ENCODE measurements at regions of chr3 and their contacts with region 1.

Region 1: GRCh38 chr3:185983495-185984141 is 45.8 kb upstream of the TRA2B start:
- DNase-seq: peak; percentile 62 to 85
- H3K4me3 ChIP-seq: no peak overlapping the region
- H3K27ac ChIP-seq: no peak overlapping the region
- H3K4me1 ChIP-seq: no peaks in the 10 kb centered on the region
- H3K27me3 ChIP-seq: no peaks in the 10 kb centered on the region
- CTCF ChIP-seq: peak; percentile 99

Region 2: GRCh38 chr3:185645596-185646381 is 337.8 kb before region 1 on chr3:
- CTCF ChIA-PET with region 1: no interaction called
- POLR2A ChIA-PET with region 1: no interaction called
- intact Hi-C with region 1: no loop called
- DNase-seq: no peak
- H3K4me3 ChIP-seq: no peak overlapping the region
- H3K27ac ChIP-seq: no peak overlapping the region
- H3K4me1 ChIP-seq: no peaks in the 10 kb centered on the region
- H3K27me3 ChIP-seq: no peaks in the 10 kb centered on the region
- CTCF ChIP-seq: no peak

Region 3: GRCh38 chr3:185659942-185660921 is 323.4 kb before region 1 on chr3:
- CTCF ChIA-PET with region 1: interaction called, 6 read pairs
- POLR2A ChIA-PET with region 1: interaction called, 3 read pairs
- intact Hi-C with region 1: loop called (anchors 2 kb)
- DNase-seq: peak; percentile 74
- H3K4me3 ChIP-seq: no peak overlapping the region
- H3K27ac ChIP-seq: peak overlapping the region; percentile 1; the same call in 1 of the 2 replicates
- H3K4me1 ChIP-seq: peaks cover 17% of the 10 kb centered on the region
- H3K27me3 ChIP-seq: no peaks in the 10 kb centered on the region
- CTCF ChIP-seq: peak; percentile 100

Region 4: GRCh38 chr3:185687271-185687878 is 296.2 kb before region 1 on chr3:
- CTCF ChIA-PET with region 1: no interaction called
- POLR2A ChIA-PET with region 1: interaction called, 17 read pairs
- intact Hi-C with region 1: no loop called
- DNase-seq: peak; percentile 21 to 51
- H3K4me3 ChIP-seq: no peak overlapping the region
- H3K27ac ChIP-seq: peak overlapping the region; percentile 93
- H3K4me1 ChIP-seq: peaks cover 59% of the 10 kb centered on the region
- H3K27me3 ChIP-seq: no peaks in the 10 kb centered on the region
- CTCF ChIP-seq: no peak

Region 5: GRCh38 chr3:186108941-186109865 is 125.6 kb after region 1 on chr3 and contains the start of gene ETV5:
- CTCF ChIA-PET with region 1: no interaction called
- POLR2A ChIA-PET with region 1: no interaction called
- intact Hi-C with region 1: loop called (anchors 5 kb)
- DNase-seq: peak; percentile 100
- H3K4me3 ChIP-seq: peak within 1 kb of the TSS; percentile 87
- H3K27ac ChIP-seq: peak within 1 kb of the TSS; percentile 80
- H3K4me1 ChIP-seq: peaks cover 40% of the 10 kb centered on the region
- H3K27me3 ChIP-seq: no peaks in the 10 kb centered on the region
- CTCF ChIP-seq: no peak
- total RNA-seq, gene ETV5: 39.3 and 65.7 TPM in 2 replicates

Region 6: GRCh38 chr3:186259612-186260383 is 276.2 kb after region 1 on chr3:
- CTCF ChIA-PET with region 1: no interaction called
- POLR2A ChIA-PET with region 1: no interaction called
- intact Hi-C with region 1: loop called (anchors 5 kb)
- DNase-seq: peak; percentile 73 to 81
- H3K4me3 ChIP-seq: peak overlapping the region; percentile 23; the same call in 1 of the 2 replicates
- H3K27ac ChIP-seq: no peak overlapping the region
- H3K4me1 ChIP-seq: peaks cover 6% of the 10 kb centered on the region
- H3K27me3 ChIP-seq: peaks cover 4% of the 10 kb centered on the region; the same call in 1 of the 2 replicates
- CTCF ChIP-seq: peak; percentile 93

Region 7: DNA sequence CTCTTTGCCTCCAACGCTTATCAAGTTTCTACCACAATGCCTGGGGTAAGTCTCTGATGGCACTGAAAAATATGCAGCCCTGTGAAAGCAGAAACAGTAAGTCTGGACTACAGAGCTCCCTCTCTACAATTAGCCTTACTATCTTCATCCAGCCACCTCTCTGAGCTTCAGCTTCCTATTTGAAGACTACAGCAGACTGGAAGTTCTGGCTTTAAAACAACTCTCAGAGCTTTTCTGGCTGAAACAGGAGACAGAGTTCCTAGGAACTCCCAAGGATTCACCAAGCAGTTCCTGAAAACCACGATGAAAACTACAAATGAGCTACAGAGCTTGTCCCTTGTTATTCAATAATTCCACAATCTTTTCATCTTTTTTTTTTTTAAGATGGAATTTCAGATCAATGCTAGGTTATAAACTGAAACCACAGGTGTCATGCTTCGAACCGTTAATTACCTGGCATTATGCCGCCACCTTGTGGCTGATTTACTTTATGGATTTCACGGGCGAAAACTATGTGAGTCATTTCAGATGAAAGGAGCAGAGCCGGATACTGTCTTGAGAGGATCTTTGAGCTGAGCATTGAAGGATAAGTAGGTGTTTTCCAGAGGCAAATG is 556.7 kb after region 1 on chr3:
- CTCF ChIA-PET with region 1: interaction called, 3 read pairs
- POLR2A ChIA-PET with region 1: no interaction called
- intact Hi-C with region 1: loop called (anchors 1 kb)
- DNase-seq: peak; percentile 79 to 86
- H3K4me3 ChIP-seq: no peak overlapping the region; the same call in 1 of the 2 replicates
- H3K27ac ChIP-seq: no peak overlapping the region
- H3K4me1 ChIP-seq: 0 out of 2 replicates have a peak, but pooled peaks cover 3% of the 10 kb centered on the region
- H3K27me3 ChIP-seq: no peaks in the 10 kb centered on the region
- CTCF ChIP-seq: peak; percentile 97

Region 8: GRCh38 chr3:187027531-187028278 is 1044.1 kb after region 1 on chr3:
- CTCF ChIA-PET with region 1: no interaction called
- POLR2A ChIA-PET with region 1: interaction called, 17 read pairs
- intact Hi-C with region 1: no loop called
- DNase-seq: no peak
- H3K4me3 ChIP-seq: no peak overlapping the region
- H3K27ac ChIP-seq: no peak overlapping the region
- H3K4me1 ChIP-seq: no peaks in the 10 kb centered on the region
- H3K27me3 ChIP-seq: no peaks in the 10 kb centered on the region
- CTCF ChIP-seq: no peak